Left ventricle myocardium inferior (tissue), 1 donor: ENCODE measurements at regions of chr10 and their contacts with region 1.

Region 1: DNA sequence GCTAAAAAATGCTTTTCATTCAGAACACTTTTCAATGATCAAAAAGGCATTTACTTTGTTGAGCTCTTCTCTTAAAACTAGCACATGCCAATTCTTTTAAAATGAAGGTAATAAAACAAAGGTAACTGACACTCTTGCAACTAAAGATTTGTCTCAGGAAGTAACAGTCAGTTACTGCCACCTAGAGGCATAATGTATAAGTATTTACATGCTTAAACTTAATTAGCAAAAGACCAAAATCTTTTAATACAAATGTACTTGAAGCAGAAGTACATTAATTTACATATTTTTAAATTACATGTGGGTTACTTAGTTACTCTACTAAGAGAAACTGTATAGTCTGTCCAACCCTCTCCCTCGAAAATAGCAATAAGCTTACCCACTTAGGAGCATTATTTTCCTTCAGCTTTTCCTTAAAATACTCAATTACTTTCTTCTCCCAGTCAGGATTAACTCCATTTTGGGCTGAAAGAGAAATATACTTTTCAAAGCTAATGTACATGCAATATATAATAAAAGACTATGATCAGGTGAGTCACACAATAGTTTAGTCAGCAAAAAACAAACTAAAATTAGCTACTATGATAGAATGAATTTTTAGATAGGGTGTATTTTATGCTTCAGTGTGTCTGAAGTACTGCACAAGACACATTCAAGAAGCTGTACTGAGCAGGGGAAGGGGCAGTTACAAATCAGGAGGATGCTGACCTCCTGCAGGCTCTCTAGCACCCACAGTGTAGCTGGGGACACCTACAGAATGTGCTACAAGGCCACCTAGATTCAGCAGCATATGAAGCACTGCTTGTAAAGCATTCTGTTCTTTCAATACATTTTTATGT is 13.0 kb downstream of the MCMBP start:
- DNase-seq: no peak
- H3K4me3 ChIP-seq: no peak overlapping the region
- H3K27ac ChIP-seq: no peak overlapping the region
- H3K4me1 ChIP-seq: peaks cover 7% of the 10 kb centered on the region
- H3K27me3 ChIP-seq: no peaks in the 10 kb centered on the region
- CTCF ChIP-seq: peak; percentile 75

Region 2: GRCh38 chr10:119686439-119687191 is 173.0 kb before region 1 on chr10:
- intact Hi-C with region 1: loop called (anchors 10 kb)
- DNase-seq: peak; percentile 65
- H3K4me3 ChIP-seq: peak overlapping the region; percentile 52
- H3K27ac ChIP-seq: peak overlapping the region; percentile 58
- H3K4me1 ChIP-seq: peaks cover 22% of the 10 kb centered on the region
- H3K27me3 ChIP-seq: no peaks in the 10 kb centered on the region
- CTCF ChIP-seq: peak; percentile 94

Region 3: DNA sequence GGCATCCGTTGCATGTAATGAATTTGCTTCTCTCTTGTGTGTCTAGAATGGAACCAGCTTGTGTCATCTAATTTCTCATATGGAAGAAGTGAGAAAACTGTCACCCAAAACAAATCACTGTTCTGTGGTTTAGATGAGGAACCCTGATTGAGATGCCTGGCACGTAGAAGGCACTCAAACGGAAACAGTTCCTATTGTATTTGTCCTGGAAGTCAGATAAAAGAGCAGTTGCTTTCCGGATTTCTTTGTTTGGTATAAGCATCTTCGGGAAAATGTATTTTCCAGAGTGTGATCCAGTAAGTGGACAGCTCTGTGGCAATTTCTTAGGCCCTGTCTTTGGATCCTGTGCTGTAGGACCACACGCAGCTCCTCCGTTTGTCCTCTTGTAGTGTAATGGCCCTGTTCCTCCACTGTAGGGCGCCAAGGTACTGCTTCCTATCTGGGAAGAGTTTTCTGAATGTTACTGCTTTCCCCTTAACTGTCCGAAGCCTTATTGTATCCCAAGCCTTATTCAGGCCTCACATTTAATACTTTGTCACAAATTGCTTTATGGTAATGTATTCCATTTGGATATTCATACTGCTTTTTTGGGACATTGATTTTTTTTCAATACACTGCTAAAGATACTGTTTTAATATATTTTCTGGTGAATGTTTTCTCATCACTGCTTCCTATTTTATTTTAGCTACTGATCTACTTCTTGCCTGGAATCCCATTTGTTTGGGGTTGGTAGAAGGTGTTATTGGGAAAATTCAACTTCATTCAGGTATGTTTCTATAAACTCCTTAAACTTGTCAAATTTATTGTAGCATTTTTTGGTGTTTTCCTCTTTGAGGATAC is 109.0 kb before region 1 on chr10:
- intact Hi-C with region 1: loop called (anchors 5 kb)
- DNase-seq: peak; percentile 44
- H3K4me3 ChIP-seq: no peak overlapping the region
- H3K27ac ChIP-seq: no peak overlapping the region
- H3K4me1 ChIP-seq: peaks cover 12% of the 10 kb centered on the region
- H3K27me3 ChIP-seq: no peaks in the 10 kb centered on the region
- CTCF ChIP-seq: peak; percentile 94